ENCODE measurements at regions of chr2 and their contacts with region 1.

Region 1: DNA sequence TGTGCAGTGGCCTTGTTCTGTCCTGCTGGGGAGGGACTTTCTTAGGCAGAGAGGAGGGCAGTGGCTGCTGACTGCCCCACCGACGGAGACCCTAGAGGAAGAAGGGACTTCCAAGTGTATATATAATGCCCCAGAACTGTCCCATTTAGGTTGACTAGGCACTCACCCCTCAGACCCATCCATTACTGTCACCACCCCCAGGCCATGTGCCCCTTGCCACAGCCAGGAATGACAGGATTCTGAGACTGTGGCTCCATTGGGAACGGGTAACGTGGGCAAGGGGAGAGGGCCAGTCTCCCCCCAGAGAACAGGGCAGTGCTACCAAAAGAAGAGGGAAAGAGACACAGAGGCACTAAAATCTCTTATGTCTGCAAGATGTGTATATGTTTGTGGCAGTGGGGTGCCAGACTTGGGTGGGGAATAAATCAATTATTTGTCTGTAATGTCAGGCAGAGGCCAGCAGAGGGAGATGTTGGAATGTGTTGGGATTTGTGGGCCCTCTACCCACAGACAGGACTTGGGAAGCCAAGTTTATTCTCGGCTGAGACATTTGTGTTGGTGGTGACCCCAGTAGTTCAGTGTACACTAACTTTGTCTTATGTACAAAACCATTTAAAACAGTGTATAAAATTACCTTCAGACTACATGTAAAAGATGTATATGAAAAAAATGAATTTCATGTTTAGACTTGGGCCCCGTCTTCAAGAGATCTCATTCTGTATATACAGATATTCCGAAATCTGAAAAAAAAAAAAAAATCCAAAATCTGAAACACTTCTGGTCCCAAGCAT is 24.0 kb upstream of the TMEM37 start:
- DNase-seq: peak; percentile 58 to 85
- H3K4me3 ChIP-seq: no peak overlapping the region
- H3K27ac ChIP-seq: peak overlapping the region in 3 of 5 donors; percentile 19 to 62 (median 54)
- H3K4me1 ChIP-seq: peaks cover 0 to 24% (median 20%) of the 10 kb centered on the region in 4 donors
- H3K27me3 ChIP-seq: no peaks in the 10 kb centered on the region
- CTCF ChIP-seq: peak in 5 of 7 experiments; percentile 70 to 94 (median 85)
- EP300 ChIP-seq: no peak
- POLR2A ChIP-seq: no peak

Region 2: GRCh38 chr2:118842661-118843482 is 564.8 kb before region 1 on chr2:
- intact Hi-C with region 1: no loop called
- DNase-seq: peak in 1 of 2 donors; percentile 69
- H3K4me3 ChIP-seq: peak overlapping the region; percentile 18 to 43 (median 34)
- H3K27ac ChIP-seq: no peak overlapping the region
- H3K4me1 ChIP-seq: peaks cover 46 to 56% (median 50%) of the 10 kb centered on the region in 4 donors
- H3K27me3 ChIP-seq: peaks cover 54 to 100% (median 100%) of the 10 kb centered on the region in 3 donors
- CTCF ChIP-seq: no peak
- EP300 ChIP-seq: no peak
- POLR2A ChIP-seq: no peak

Region 3: GRCh38 chr2:119476301-119477021 is 68.8 kb after region 1 on chr2:
- intact Hi-C with region 1: loop called (anchors 5 kb)
- DNase-seq: peak; percentile 63 to 85
- H3K4me3 ChIP-seq: no peak overlapping the region
- H3K27ac ChIP-seq: no peak overlapping the region
- H3K4me1 ChIP-seq: peaks cover 10 to 23% (median 17%) of the 10 kb centered on the region in 4 donors
- H3K27me3 ChIP-seq: no peaks in the 10 kb centered on the region
- CTCF ChIP-seq: peak in 5 of 7 experiments; percentile 94 to 98 (median 96)
- EP300 ChIP-seq: no peak
- POLR2A ChIP-seq: no peak